Tibial artery (tissue), 4 donors: ENCODE measurements at regions of chr7 and their contacts with region 1.

Region 1: GRCh38 chr7:45136106-45137060 is 21.2 kb upstream of the RAMP3 start:
- DNase-seq: peak in 1 of 2 donors; percentile 75
- H3K4me3 ChIP-seq: no peak overlapping the region
- H3K27ac ChIP-seq: no peak overlapping the region
- H3K4me1 ChIP-seq: no peaks in the 10 kb centered on the region
- H3K27me3 ChIP-seq: peaks cover 0 to 17% of the 10 kb centered on the region in 2 donors
- CTCF ChIP-seq: peak; percentile 75 to 81

Region 2: GRCh38 chr7:44858161-44858560 is 278.2 kb before region 1 on chr7:
- intact Hi-C with region 1: loop called (anchors 10 kb)
- DNase-seq: no peak
- H3K4me3 ChIP-seq: no peak overlapping the region
- H3K27ac ChIP-seq: no peak overlapping the region
- H3K4me1 ChIP-seq: peaks cover 0 to 4% (median 0%) of the 10 kb centered on the region in 4 donors
- H3K27me3 ChIP-seq: no peaks in the 10 kb centered on the region
- CTCF ChIP-seq: no peak

Region 3: GRCh38 chr7:44962483-44963251 is 173.7 kb before region 1 on chr7:
- intact Hi-C with region 1: loop called (anchors 10 kb)
- DNase-seq: peak in 1 of 2 donors; percentile 65
- H3K4me3 ChIP-seq: peak overlapping the region; percentile 35 to 54
- H3K27ac ChIP-seq: no peak overlapping the region
- H3K4me1 ChIP-seq: peaks cover 0 to 14% (median 12%) of the 10 kb centered on the region in 4 donors
- H3K27me3 ChIP-seq: peaks cover 0 to 39% of the 10 kb centered on the region in 2 donors
- CTCF ChIP-seq: no peak